ENCODE measurements at regions of chr5 and their contacts with region 1.

Region 1: GRCh38 chr5:95554647-95555548 is at the starts of genes ARSK and SKIC3:
- DNase-seq: peak; percentile 83 to 98
- H3K4me3 ChIP-seq: peak within 1 kb of the TSS; percentile 79 to 87
- H3K27ac ChIP-seq: peak within 1 kb of the TSS; percentile 84 to 86
- H3K4me1 ChIP-seq: peaks cover 0 to 13% of the 10 kb centered on the region in 2 donors
- H3K27me3 ChIP-seq: no peaks in the 10 kb centered on the region
- CTCF ChIP-seq: peak; percentile 24 to 52 (median 31)
- total RNA-seq, gene ARSK: 3.6 TPM
- total RNA-seq, gene SKIC3: 12.7 TPM

Region 2: GRCh38 chr5:95565280-95565920 is 10.5 kb after region 1 on chr5:
- intact Hi-C with region 1: no loop called
- DNase-seq: no peak
- H3K4me3 ChIP-seq: no peak overlapping the region
- H3K27ac ChIP-seq: no peak overlapping the region
- H3K4me1 ChIP-seq: no peaks in the 10 kb centered on the region
- H3K27me3 ChIP-seq: no peaks in the 10 kb centered on the region
- CTCF ChIP-seq: no peak

Region 3: GRCh38 chr5:95620030-95620869 is 65.4 kb after region 1 on chr5 and contains the start of gene GPR150:
- intact Hi-C with region 1: no loop called
- DNase-seq: peak in 1 of 2 donors; percentile 74
- H3K4me3 ChIP-seq: peak within 1 kb of the TSS; percentile 71 to 73
- H3K27ac ChIP-seq: no peak within 1 kb of the TSS
- H3K4me1 ChIP-seq: peaks cover 3 to 8% of the 10 kb centered on the region in 2 donors
- H3K27me3 ChIP-seq: no peaks in the 10 kb centered on the region
- CTCF ChIP-seq: peak in 1 of 3 experiments; percentile 6
- total RNA-seq, gene GPR150: 9.6 TPM

Region 4: GRCh38 chr5:95730730-95731570 is 176.1 kb after region 1 on chr5 and contains the start of gene RHOBTB3:
- intact Hi-C with region 1: loop called (anchors 10 kb)
- DNase-seq: peak; percentile 50 to 90
- H3K4me3 ChIP-seq: peak within 1 kb of the TSS; percentile 72 to 94
- H3K27ac ChIP-seq: peak within 1 kb of the TSS; percentile 89
- H3K4me1 ChIP-seq: peaks cover 0 to 22% of the 10 kb centered on the region in 2 donors
- H3K27me3 ChIP-seq: no peaks in the 10 kb centered on the region
- CTCF ChIP-seq: no peak
- total RNA-seq, gene RHOBTB3: 153 TPM

Region 5: DNA sequence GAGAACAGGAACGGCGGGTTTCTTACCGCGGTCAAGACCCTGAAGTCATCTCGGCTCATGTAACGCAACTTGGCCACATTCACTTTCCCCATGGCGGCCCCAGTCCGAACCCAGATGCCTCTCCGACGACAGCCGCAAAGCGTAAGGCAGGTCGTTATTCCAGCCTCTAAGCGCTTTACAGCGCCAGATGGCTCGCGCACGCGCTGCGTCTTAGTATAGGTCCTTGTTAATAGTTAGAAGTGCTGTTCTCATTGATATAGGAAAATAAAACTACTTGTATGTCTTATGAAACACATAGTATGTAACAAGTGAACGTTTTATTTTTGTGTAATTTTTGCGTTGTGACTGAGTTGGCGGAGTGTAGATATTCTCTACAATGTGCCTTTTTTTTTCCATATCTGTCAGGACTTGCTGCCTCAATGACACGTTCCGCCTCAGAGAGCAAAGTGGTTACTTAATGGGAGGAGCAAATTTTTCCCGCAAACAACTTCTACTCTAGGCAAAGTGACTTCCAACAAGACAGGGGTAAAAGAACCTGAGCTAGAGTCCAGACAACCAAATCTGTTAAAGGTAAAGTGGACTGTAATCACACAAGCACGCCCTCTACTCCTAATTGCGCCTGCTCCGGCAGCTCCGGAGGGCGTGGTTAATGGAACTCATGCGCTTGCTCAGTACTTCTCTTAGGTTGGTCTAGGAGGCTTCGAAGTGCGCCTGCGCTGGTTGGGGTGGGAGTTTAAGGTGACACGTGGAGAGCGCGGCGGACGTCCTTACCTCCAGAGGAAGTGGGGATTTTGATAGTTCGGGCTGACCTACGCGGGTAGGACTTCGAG is 1628.4 kb after region 1 on chr5 and contains the start of gene RIOK2:
- intact Hi-C with region 1: loop called (anchors 10 kb)
- DNase-seq: peak; percentile 74 to 96
- H3K4me3 ChIP-seq: peak within 1 kb of the TSS; percentile 69 to 79
- H3K27ac ChIP-seq: peak within 1 kb of the TSS; percentile 73 to 93
- H3K4me1 ChIP-seq: peaks cover 0 to 14% of the 10 kb centered on the region in 2 donors
- H3K27me3 ChIP-seq: no peaks in the 10 kb centered on the region
- CTCF ChIP-seq: no peak
- total RNA-seq, gene RIOK2: 3.7 TPM